ENCODE measurements at regions of chr13 and their contacts with region 1.

Region 1: GRCh38 chr13:49443704-49444523 is at the starts of genes CAB39L and SETDB2:
- DNase-seq: peak; percentile 95 to 98
- H3K4me3 ChIP-seq: peak within 1 kb of the TSS; percentile 89 to 96 (median 94)
- H3K27ac ChIP-seq: peak within 1 kb of the TSS; percentile 99
- H3K4me1 ChIP-seq: peaks cover 0 to 3% (median 0%) of the 10 kb centered on the region in 4 experiments; a peak in 1 of 7 replicates
- H3K27me3 ChIP-seq: no peaks in the 10 kb centered on the region
- CTCF ChIP-seq: peak; percentile 23 to 48 (median 30)
- EP300 ChIP-seq: peak in 1 of 2 experiments; percentile 30; a peak in 1 of 3 replicates
- POLR2A ChIP-seq: peak; percentile 90 to 96
- RAD21 ChIP-seq: peak in 1 of 2 experiments; percentile 5; a peak in 1 of 4 replicates
- total RNA-seq, gene CAB39L: 4.1 and 4.8 TPM in 2 replicates
- total RNA-seq, gene SETDB2: 5.4 and 6.1 TPM in 2 replicates

Region 2: GRCh38 chr13:49454388-49455006 is 10.6 kb after region 1 on chr13:
- CTCF ChIA-PET with region 1: no interaction called
- POLR2A ChIA-PET with region 1: interaction called, 17 read pairs
- DNase-seq: no peak
- H3K4me3 ChIP-seq: no peak overlapping the region
- H3K27ac ChIP-seq: no peak overlapping the region
- H3K4me1 ChIP-seq: no peaks in the 10 kb centered on the region
- H3K27me3 ChIP-seq: no peaks in the 10 kb centered on the region
- CTCF ChIP-seq: no peak
- EP300 ChIP-seq: no peak
- POLR2A ChIP-seq: no peak
- RAD21 ChIP-seq: no peak

Region 3: GRCh38 chr13:49495783-49496762 is 52.2 kb after region 1 on chr13 and contains the start of gene PHF11:
- CTCF ChIA-PET with region 1: interaction called, 3 read pairs
- POLR2A ChIA-PET with region 1: interaction called, 19 read pairs
- DNase-seq: peak in 1 of 2 experiments; percentile 83
- H3K4me3 ChIP-seq: peak within 1 kb of the TSS; percentile 33 to 82 (median 72)
- H3K27ac ChIP-seq: peak within 1 kb of the TSS; percentile 1; the same call in 1 of the 2 replicates
- H3K4me1 ChIP-seq: no peaks in the 10 kb centered on the region
- H3K27me3 ChIP-seq: 0 out of 7 replicates have a peak, but pooled peaks cover 0 to 2% (median 0%) of the 10 kb centered on the region in 4 experiments
- CTCF ChIP-seq: peak in 2 of 3 experiments; percentile 13 to 29; a peak in 2 of 4 replicates
- EP300 ChIP-seq: no peak
- POLR2A ChIP-seq: peak; percentile 35 to 70
- RAD21 ChIP-seq: peak; percentile 31
- total RNA-seq, gene PHF11: 6.1 and 9.3 TPM in 2 replicates

Measured in H1 (cell line).